Heart right ventricle (tissue), 16 donors: ENCODE measurements at regions of chr13 and their contacts with region 1.

Region 1: GRCh38 chr13:23626700-23627099 is 56.5 kb downstream of the TNFRSF19 start:
- DNase-seq: no peak
- ATAC-seq: peak in 6 of 8 donors; percentile 33 to 81 (median 42)
- H3K4me3 ChIP-seq: no peak overlapping the region
- H3K27ac ChIP-seq: peak overlapping the region in 9 of 10 donors; percentile 23 to 69 (median 44)
- H3K4me1 ChIP-seq: peaks cover 0 to 51% (median 34%) of the 10 kb centered on the region in 9 donors
- H3K27me3 ChIP-seq: no peaks in the 10 kb centered on the region
- CTCF ChIP-seq: no peak

Region 2: GRCh38 chr13:23656637-23657371 is 30.1 kb after region 1 on chr13:
- intact Hi-C with region 1: loop called in 1 of 10 experiments (anchors 2 kb)
- DNase-seq: peak in 1 of 2 donors; percentile 77
- ATAC-seq: peak in 7 of 8 donors; percentile 65 to 87 (median 80)
- H3K4me3 ChIP-seq: no peak overlapping the region
- H3K27ac ChIP-seq: peak overlapping the region in 8 of 10 donors; percentile 34 to 73 (median 64)
- H3K4me1 ChIP-seq: peaks cover 0 to 76% (median 58%) of the 10 kb centered on the region in 9 donors
- H3K27me3 ChIP-seq: no peaks in the 10 kb centered on the region
- CTCF ChIP-seq: no peak

Region 3: GRCh38 chr13:23673354-23673753 is 46.7 kb after region 1 on chr13:
- intact Hi-C with region 1: loop called in 1 of 10 experiments (anchors 2 kb)
- DNase-seq: peak in 1 of 2 donors; percentile 49
- ATAC-seq: peak; percentile 15 to 83 (median 65)
- H3K4me3 ChIP-seq: no peak overlapping the region
- H3K27ac ChIP-seq: peak overlapping the region in 8 of 10 donors; percentile 11 to 69 (median 42)
- H3K4me1 ChIP-seq: peaks cover 3 to 37% (median 22%) of the 10 kb centered on the region in 9 donors
- H3K27me3 ChIP-seq: no peaks in the 10 kb centered on the region
- CTCF ChIP-seq: no peak

Region 4: GRCh38 chr13:23752111-23753001 is 125.7 kb after region 1 on chr13:
- intact Hi-C with region 1: no loop called
- DNase-seq: no peak
- ATAC-seq: no peak
- H3K4me3 ChIP-seq: no peak overlapping the region
- H3K27ac ChIP-seq: no peak overlapping the region
- H3K4me1 ChIP-seq: peaks cover 0 to 11% (median 0%) of the 10 kb centered on the region in 9 donors
- H3K27me3 ChIP-seq: no peaks in the 10 kb centered on the region
- CTCF ChIP-seq: no peak